ENCODE measurements at regions of chr11 and their contacts with region 1.

Region 1: GRCh38 chr11:17230867-17231851 is 23.4 kb upstream of the PIK3C2A start:
- DNase-seq: peak; percentile 53
- H3K4me3 Mint-ChIP-seq: no peak overlapping the region
- H3K27ac Mint-ChIP-seq: peak overlapping the region; percentile 25
- H3K4me1 Mint-ChIP-seq: peaks cover 12% of the 10 kb centered on the region
- H3K27me3 Mint-ChIP-seq: peaks cover 29% of the 10 kb centered on the region

Region 2: DNA sequence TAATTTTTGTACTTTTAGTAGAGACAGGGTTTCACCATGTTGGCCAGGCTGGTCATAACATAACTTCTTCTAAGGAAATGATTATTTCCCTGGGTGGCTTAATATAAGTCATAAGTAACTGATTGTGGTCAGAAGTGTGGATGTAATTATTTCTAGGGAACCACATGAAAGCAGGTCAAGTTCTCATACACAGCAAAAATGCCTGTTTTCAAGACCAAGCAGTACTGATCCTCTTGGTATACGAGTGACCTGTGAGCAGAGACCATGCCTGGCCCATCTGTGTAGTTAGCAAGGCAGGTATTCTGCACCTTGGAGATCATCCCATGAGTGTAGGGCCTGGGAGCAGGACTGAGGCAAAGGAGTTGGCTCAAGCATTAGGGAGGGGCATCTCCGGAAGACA is 12.9 kb after region 1 on chr11:
- intact Hi-C with region 1: loop called (anchors 1 kb)
- DNase-seq: no peak
- H3K4me3 Mint-ChIP-seq: no peak overlapping the region
- H3K27ac Mint-ChIP-seq: no peak overlapping the region
- H3K4me1 Mint-ChIP-seq: peaks cover 5% of the 10 kb centered on the region
- H3K27me3 Mint-ChIP-seq: peaks cover 48% of the 10 kb centered on the region

Region 3: GRCh38 chr11:17276236-17277023 is 45.3 kb after region 1 on chr11 and contains the start of gene NUCB2:
- intact Hi-C with region 1: loop called (anchors 2 kb)
- DNase-seq: peak; percentile 95
- H3K4me3 Mint-ChIP-seq: peak within 1 kb of the TSS; percentile 91
- H3K27ac Mint-ChIP-seq: peak within 1 kb of the TSS; percentile 89
- H3K4me1 Mint-ChIP-seq: peaks cover 43% of the 10 kb centered on the region
- H3K27me3 Mint-ChIP-seq: peaks cover 3% of the 10 kb centered on the region
- total RNA-seq, gene NUCB2: 99.4 and 106 TPM in 2 replicates

Region 4: DNA sequence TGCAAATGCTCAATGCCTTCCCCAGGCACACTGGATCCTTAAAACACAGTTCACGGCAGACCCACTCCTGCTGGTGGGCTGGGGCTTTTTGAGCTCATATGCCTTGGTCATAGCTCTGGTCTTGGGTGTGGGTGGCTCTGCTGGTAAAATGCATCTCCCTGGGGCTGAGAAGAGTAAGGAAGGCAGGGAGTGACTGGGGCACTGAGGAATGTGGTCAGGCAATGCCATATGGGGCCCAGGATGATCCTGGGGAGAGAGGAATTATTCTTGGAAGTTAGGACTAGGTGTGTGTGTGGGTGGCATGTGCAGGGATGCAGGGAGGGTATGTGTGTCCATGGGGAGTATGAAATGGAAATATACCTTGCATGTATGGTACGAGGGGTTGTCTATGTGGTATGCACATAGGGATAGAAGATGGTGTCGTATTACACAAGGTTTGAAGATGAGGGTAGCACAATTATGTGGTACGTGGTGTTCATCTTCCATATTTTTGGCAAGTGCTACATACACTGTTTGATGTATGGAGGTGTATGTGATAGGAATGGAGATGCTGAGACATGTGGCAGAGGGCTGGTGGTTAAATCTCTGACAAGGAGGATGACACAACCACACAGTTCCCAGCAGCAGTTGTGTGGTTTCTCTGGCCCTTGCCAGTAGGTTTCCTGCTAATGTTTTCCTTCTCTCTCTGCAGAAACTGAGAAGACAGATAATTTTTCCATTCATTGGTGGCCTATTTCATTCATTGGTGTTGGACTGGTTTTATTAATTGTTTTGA is 137.2 kb after region 1 on chr11:
- intact Hi-C with region 1: loop called (anchors 1 kb)
- DNase-seq: no peak
- H3K4me3 Mint-ChIP-seq: no peak overlapping the region
- H3K27ac Mint-ChIP-seq: peak overlapping the region; percentile 79
- H3K4me1 Mint-ChIP-seq: peaks cover 15% of the 10 kb centered on the region
- H3K27me3 Mint-ChIP-seq: peaks cover 1% of the 10 kb centered on the region

Measured in activated T-helper 2 cell treated with anti-CD3 and anti-CD28 coated beads, Interferon-gamma antibody, Interleukin-2, Interleukin-4, amounts not matched to agents 10 μg/mL and 5 μg/mL and 100 μg/mL, durations not matched to agents 14 hours and 24 hours and 36 hours (primary cell).